Transverse colon (tissue), 4 donors: ENCODE measurements at regions of chr1 and their contacts with region 1.

Region 1: DNA sequence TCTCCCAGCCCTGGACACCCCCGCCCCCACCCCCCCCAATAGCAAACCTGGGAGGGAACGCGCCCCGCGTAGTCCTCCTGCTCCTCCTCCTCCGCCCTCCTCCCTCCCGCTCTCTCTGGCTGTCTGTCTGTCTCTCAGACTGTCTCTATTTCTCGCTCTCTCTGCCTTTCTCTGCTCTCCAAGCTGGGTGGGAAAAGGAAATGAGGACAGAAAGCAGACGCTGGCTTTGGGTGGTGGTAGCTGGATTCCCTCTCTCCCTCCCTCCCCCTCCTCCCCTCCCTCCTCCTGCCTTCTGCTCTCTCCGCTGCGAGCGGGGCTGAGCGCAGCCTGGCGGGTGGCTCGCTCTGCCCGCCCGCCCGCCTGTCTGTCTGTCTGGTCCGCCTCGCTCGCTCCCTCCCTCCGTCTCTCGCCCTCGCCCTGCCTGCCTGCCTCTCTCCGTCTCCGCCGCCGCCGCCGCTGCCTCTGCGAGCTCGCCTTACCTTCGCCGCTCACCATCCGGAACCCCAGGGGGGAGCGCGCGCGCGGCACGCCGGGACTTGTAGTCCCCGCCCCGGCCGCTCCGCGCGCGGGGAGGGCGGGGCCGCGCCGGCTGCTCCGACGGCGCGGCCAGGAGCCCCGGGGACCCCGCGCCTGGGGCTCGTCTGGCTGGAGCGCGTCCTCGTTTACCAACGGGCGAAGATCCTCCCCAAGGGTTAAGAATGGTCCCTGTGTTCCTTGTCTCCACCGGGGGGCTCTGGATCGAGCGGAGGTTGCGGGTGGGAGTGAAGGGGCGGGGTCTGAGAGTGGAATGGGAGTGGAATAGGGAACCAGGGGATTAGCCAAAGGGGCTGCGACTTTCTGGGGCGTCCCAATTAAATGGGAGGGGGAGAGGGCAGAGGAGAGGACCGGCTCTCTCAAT is at the start of gene AHDC1:
- DNase-seq: peak; percentile 94
- H3K4me3 ChIP-seq: peak within 1 kb of the TSS; percentile 75 to 96 (median 90)
- H3K27ac ChIP-seq: peak within 1 kb of the TSS; percentile 87 to 97 (median 96)
- H3K4me1 ChIP-seq: peaks cover 24 to 50% (median 41%) of the 10 kb centered on the region in 4 donors
- H3K27me3 ChIP-seq: no peaks in the 10 kb centered on the region
- CTCF ChIP-seq: peak in 1 of 5 experiments; percentile 49
- EP300 ChIP-seq: no peak
- POLR2A ChIP-seq: peak; percentile 89
- total RNA-seq, gene AHDC1: 11.7 to 34.4 (median 21.3) TPM

Region 2: DNA sequence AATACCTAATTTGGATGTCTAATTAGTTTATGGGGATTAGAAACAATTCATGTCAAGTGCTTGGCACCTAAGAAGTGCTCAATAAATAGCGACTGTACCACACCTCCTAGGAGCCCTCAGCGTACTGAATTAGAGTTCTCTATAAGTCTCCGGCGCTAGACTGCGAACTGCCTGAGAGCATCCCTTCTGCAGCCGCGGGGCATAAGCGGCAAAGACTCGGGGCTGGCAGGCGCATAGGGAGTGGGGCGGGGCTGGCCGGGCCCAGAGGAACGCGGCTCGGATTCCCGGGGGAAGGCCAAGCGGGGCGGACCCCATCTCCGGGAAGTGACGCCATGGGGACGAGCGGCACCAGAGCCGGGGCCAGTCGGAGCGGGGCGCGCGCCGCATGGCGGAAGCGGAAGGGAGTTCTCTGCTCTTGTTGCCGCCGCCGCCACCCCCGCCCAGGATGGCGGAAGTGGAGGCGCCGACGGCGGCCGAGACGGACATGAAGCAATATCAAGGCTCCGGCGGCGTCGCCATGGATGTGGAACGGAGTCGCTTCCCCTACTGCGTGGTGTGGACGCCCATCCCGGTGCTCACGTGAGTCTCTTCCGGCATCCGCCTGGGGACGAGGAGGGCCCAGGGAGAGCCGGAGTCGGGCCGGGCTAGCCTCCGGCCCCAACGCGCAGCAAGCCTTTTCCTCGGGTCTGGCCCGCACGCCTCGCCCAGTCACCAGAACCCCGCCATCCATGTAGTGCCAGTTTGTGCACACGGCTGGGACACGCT is 281.9 kb before region 1 on chr1 and contains the start of gene TMEM222:
- in situ Hi-C with region 1: no loop called
- intact Hi-C with region 1: loop called (anchors 10 kb)
- DNase-seq: peak; percentile 98
- H3K4me3 ChIP-seq: peak within 1 kb of the TSS; percentile 74 to 90 (median 82)
- H3K27ac ChIP-seq: peak within 1 kb of the TSS; percentile 89 to 96 (median 90)
- H3K4me1 ChIP-seq: peaks cover 13 to 34% (median 18%) of the 10 kb centered on the region in 4 donors
- H3K27me3 ChIP-seq: peaks cover 8% of the 10 kb centered on the region
- CTCF ChIP-seq: peak in 4 of 5 experiments; percentile 19 to 55 (median 28)
- EP300 ChIP-seq: peak; percentile 40
- POLR2A ChIP-seq: peak; percentile 85
- total RNA-seq, gene TMEM222: 14.6 to 41.0 (median 22.3) TPM

Region 3: DNA sequence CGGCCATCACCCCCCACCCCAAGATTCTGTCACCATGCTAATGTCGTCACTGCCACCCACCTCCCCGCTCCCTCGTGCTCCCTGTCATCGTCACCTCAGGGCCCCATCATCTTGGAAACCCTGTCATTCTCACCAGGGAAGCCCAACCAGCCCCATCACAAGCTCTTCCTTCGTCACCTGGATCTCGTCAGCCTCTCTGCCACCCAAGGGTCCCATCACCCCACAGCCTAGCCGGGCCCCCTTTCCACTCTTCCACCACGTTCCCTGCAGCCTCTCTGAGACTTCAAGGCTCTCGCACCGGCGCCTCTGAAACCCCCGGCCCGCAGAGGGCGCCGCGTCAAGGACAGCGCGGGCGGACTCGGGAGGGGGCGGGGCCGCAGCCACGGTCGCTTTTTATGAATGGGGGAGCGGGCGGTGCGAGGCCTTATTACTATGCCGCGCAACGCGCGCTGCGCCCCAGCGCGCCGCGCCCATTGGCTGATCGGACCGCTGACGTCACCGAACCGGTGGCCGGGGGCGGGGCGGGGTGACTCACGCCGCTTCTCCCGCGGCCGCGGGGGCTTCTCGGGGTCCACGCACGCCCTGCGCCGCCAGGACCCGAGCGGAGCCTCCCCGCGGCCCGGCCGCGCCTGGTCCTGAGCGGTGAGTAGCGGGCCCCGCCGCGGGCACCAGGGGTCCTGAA is 211.7 kb before region 1 on chr1 and contains the start of gene GPR3:
- in situ Hi-C with region 1: loop called in 1 of 4 experiments (anchors 10 kb)
- intact Hi-C with region 1: no loop called
- DNase-seq: peak; percentile 93
- H3K4me3 ChIP-seq: peak within 1 kb of the TSS; percentile 35 to 55 (median 46)
- H3K27ac ChIP-seq: peak within 1 kb of the TSS; percentile 29 to 74 (median 60)
- H3K4me1 ChIP-seq: peaks cover 16 to 23% (median 18%) of the 10 kb centered on the region in 4 donors
- H3K27me3 ChIP-seq: peaks cover 7% of the 10 kb centered on the region
- CTCF ChIP-seq: peak; percentile 39 to 64 (median 55)
- EP300 ChIP-seq: no peak
- POLR2A ChIP-seq: no peak
- total RNA-seq, gene GPR3: not detected

Region 4: GRCh38 chr1:27402349-27402754 is 201.6 kb before region 1 on chr1:
- in situ Hi-C with region 1: loop called in 2 of 4 experiments (anchors 10 kb)
- intact Hi-C with region 1: loop called (anchors 2 kb)
- DNase-seq: peak; percentile 83
- H3K4me3 ChIP-seq: no peak overlapping the region
- H3K27ac ChIP-seq: peak overlapping the region; percentile 65 to 88 (median 81)
- H3K4me1 ChIP-seq: peaks cover 10 to 67% (median 42%) of the 10 kb centered on the region in 4 donors
- H3K27me3 ChIP-seq: no peaks in the 10 kb centered on the region
- CTCF ChIP-seq: peak; percentile 48 to 71 (median 62)
- EP300 ChIP-seq: no peak
- POLR2A ChIP-seq: no peak

Region 5: DNA sequence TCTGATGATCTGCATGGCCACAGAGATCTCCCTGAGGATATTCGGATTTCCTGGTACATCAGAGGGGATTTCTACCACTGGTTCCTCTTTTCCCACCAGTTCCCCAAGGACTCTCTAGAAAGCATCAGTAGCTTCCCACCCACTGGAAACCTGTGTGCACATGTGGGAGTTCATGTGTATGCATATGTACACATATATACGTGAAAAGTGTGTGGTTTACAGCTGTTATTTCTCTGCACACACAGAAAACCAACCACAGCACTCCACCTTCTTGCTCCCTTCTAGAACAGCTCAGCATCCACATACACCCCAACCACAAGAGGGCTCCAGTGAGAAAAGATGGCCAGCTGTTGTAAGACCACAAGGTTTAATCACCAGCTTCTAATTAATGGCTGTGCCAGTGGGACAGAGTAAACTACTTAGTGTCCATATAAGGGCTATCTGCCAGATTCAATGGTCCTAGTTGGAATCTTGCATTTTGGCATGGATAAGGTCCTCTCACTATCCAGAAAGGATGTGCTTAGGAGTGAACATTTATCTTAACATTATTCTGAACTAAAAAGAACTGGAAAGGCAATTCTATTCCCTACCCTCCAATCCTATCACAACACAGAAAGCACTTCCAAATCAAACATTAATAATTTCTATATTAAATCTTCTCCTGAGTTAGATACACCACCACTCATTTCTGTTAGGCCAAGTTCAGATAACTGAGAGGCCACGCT is 187.4 kb before region 1 on chr1:
- in situ Hi-C with region 1: loop called in 2 of 4 experiments (anchors 10 kb)
- intact Hi-C with region 1: no loop called
- DNase-seq: peak; percentile 49
- H3K4me3 ChIP-seq: no peak overlapping the region
- H3K27ac ChIP-seq: peak overlapping the region; percentile 76 to 87 (median 82)
- H3K4me1 ChIP-seq: peaks cover 22 to 38% (median 29%) of the 10 kb centered on the region in 4 donors
- H3K27me3 ChIP-seq: no peaks in the 10 kb centered on the region
- CTCF ChIP-seq: peak; percentile 57 to 69 (median 60)
- EP300 ChIP-seq: no peak
- POLR2A ChIP-seq: no peak

Region 6: DNA sequence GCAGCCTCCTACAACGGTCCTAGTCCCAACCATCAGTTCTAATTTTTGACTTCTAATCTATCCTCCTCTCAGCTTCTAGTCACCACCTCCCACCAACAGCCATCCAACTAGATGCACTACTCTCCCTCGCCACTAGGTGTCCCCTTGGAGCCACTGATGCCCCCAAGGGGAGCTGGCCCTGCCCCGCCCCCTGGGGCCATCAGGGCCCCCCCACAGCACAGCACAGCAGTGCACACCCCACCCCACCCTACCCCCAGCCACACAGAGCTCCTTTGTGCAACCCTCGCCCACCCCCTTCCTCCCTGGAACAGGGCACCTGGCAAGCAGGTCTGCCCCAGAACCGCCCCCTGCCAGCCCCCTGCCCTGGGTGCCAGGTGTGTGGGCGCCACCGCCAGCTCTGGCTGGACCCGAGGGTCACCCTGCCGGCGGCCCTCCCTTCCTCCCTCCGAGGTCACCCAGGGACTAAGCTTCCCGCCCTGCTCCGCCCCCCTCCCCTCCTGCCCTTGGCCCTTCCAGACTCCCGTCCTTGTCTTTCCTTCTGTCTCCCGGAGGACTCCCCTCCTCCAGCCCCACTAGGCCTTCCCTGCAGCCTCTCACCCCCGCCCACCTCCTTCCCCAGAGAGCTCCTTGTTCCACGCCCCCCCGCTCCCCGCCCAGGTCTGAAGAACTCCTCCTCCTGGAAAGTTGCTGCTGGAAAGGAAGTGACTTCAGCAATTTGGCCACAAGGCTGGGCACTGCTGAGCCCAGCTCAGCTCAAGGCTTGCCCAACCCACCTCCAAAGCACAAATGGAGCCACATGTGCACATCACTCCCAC is 46.9 kb before region 1 on chr1:
- in situ Hi-C with region 1: loop called in 3 of 4 experiments (anchors 10 kb)
- intact Hi-C with region 1: loop called (anchors 2 kb)
- DNase-seq: peak; percentile 92
- H3K4me3 ChIP-seq: peak overlapping the region in 2 of 4 donors; percentile 10 to 28
- H3K27ac ChIP-seq: peak overlapping the region; percentile 88 to 97 (median 90)
- H3K4me1 ChIP-seq: peaks cover 45 to 60% (median 54%) of the 10 kb centered on the region in 4 donors
- H3K27me3 ChIP-seq: no peaks in the 10 kb centered on the region
- CTCF ChIP-seq: peak; percentile 93 to 98 (median 94)
- EP300 ChIP-seq: no peak
- POLR2A ChIP-seq: no peak

Region 7: GRCh38 chr1:27634177-27634984 is 30.5 kb after region 1 on chr1:
- in situ Hi-C with region 1: no loop called
- intact Hi-C with region 1: no loop called
- DNase-seq: peak; percentile 33
- H3K4me3 ChIP-seq: peak overlapping the region; percentile 4 to 51 (median 30)
- H3K27ac ChIP-seq: peak overlapping the region; percentile 35 to 69 (median 60)
- H3K4me1 ChIP-seq: peaks cover 0 to 31% (median 19%) of the 10 kb centered on the region in 4 donors
- H3K27me3 ChIP-seq: peaks cover 31% of the 10 kb centered on the region
- CTCF ChIP-seq: no peak
- EP300 ChIP-seq: no peak
- POLR2A ChIP-seq: no peak

Region 8: DNA sequence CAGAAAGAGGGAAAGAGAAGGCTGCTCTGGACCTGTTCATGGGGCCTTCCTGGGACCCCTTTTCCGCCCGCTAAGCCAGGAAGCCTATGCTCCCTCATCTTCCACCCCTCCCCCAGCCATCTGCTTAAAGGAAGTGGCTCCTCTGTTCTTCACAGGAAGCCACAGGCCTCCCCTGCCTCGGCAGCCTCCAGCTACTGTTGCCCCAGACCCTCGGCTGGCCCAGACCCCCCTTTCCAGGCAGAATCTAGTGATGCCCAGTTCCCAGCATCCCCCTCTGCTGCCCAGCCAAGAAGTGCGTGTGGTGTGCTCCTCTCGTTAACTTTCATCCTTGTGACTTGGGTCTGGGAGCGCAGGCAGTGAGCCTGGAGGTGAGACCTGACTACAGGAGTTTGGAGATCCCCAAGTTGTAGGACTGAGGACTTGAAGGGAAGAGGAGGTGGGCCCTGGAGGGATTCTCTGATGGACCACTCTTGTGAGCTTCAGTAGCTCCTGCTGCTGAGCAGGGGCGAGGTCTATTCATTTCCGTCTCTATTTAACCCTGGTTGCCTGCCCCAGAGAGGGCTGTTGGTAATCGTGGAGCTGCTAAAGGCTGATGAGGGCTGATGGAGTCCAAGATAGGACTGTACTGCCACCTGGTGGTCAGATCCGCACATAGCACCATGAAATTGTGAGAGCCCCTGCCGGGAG is 58.9 kb after region 1 on chr1:
- in situ Hi-C with region 1: loop called in 3 of 4 experiments (anchors 5 kb)
- intact Hi-C with region 1: no loop called
- DNase-seq: peak; percentile 89
- H3K4me3 ChIP-seq: no peak overlapping the region
- H3K27ac ChIP-seq: peak overlapping the region; percentile 41 to 62 (median 54)
- H3K4me1 ChIP-seq: peaks cover 0 to 22% (median 11%) of the 10 kb centered on the region in 4 donors
- H3K27me3 ChIP-seq: no peaks in the 10 kb centered on the region
- CTCF ChIP-seq: peak; percentile 87 to 98 (median 90)
- EP300 ChIP-seq: no peak
- POLR2A ChIP-seq: peak; percentile 17

Region 9: GRCh38 chr1:29033829-29034466 is 1430.0 kb after region 1 on chr1:
- in situ Hi-C with region 1: no loop called
- intact Hi-C with region 1: no loop called
- DNase-seq: no peak
- H3K4me3 ChIP-seq: no peak overlapping the region
- H3K27ac ChIP-seq: no peak overlapping the region
- H3K4me1 ChIP-seq: no peaks in the 10 kb centered on the region
- H3K27me3 ChIP-seq: no peaks in the 10 kb centered on the region
- CTCF ChIP-seq: peak; percentile 58 to 77 (median 64)
- EP300 ChIP-seq: no peak
- POLR2A ChIP-seq: no peak